ENCODE measurements at regions of chr16 and their contacts with region 1.

Region 1: GRCh38 chr16:21277927-21278706 is at the start of gene CRYM:
- DNase-seq: peak; percentile 33 to 91
- H3K4me3 ChIP-seq: peak within 1 kb of the TSS; percentile 50 to 69 (median 64)
- H3K27ac ChIP-seq: no peak within 1 kb of the TSS
- H3K4me1 ChIP-seq: peaks cover 4 to 10% (median 8%) of the 10 kb centered on the region in 4 experiments; a peak in 5 of 7 replicates
- H3K27me3 ChIP-seq: peaks cover 0 to 7% (median 0%) of the 10 kb centered on the region in 4 experiments; a peak in 4 of 7 replicates
- CTCF ChIP-seq: peak; percentile 76 to 88 (median 80)
- EP300 ChIP-seq: no peak
- POLR2A ChIP-seq: peak in 1 of 2 experiments; percentile 56; a peak in 2 of 3 replicates
- RAD21 ChIP-seq: peak; percentile 61 to 68
- total RNA-seq, gene CRYM: 12.9 and 14.3 TPM in 2 replicates

Region 2: GRCh38 chr16:21184834-21185233 is 93.3 kb before region 1 on chr16:
- CTCF ChIA-PET with region 1: interaction called, 57 read pairs
- POLR2A ChIA-PET with region 1: no interaction called
- DNase-seq: no peak
- H3K4me3 ChIP-seq: no peak overlapping the region
- H3K27ac ChIP-seq: no peak overlapping the region
- H3K4me1 ChIP-seq: no peaks in the 10 kb centered on the region
- H3K27me3 ChIP-seq: peaks cover 0 to 2% (median 0%) of the 10 kb centered on the region in 4 experiments; a peak in 2 of 7 replicates
- CTCF ChIP-seq: no peak
- EP300 ChIP-seq: no peak
- POLR2A ChIP-seq: no peak
- RAD21 ChIP-seq: no peak

Region 3: GRCh38 chr16:21190599-21190998 is 87.5 kb before region 1 on chr16:
- CTCF ChIA-PET with region 1: interaction called, 57 read pairs
- POLR2A ChIA-PET with region 1: no interaction called
- DNase-seq: no peak
- H3K4me3 ChIP-seq: no peak overlapping the region
- H3K27ac ChIP-seq: no peak overlapping the region
- H3K4me1 ChIP-seq: no peaks in the 10 kb centered on the region
- H3K27me3 ChIP-seq: peaks cover 0 to 2% (median 0%) of the 10 kb centered on the region in 4 experiments; a peak in 2 of 7 replicates
- CTCF ChIP-seq: no peak
- EP300 ChIP-seq: no peak
- POLR2A ChIP-seq: no peak
- RAD21 ChIP-seq: no peak

Region 4: DNA sequence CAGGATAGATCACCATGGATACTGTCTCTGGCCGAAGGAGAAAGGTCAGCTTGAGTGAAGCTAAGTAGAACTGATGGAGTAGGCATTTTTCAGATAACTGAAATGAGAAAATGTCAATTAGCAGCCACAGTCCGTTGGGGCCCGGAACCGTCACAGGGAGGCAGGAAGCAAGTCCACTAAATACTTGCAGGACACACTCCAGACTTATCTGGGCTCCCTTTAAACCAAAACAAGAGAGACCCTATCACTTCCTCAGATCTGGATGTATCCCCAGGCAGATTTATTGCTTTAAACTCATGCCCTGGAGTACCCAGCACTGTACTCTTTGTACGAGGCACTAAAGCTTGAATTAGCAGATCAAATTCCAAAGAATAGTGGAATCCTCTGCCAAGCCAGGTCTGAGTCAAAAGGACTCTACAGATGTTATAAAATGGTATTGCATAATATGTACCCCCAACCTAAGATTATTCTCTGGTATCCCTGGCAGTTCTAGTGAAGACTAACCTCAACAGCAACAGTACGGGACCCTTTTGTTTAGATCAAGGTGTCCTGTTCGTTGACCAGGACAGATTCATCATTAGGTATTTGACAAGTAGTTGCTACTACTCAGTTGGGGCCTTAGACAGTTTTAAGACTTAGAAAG is 74.8 kb before region 1 on chr16:
- CTCF ChIA-PET with region 1: interaction called, 10 read pairs
- POLR2A ChIA-PET with region 1: no interaction called
- DNase-seq: no peak
- H3K4me3 ChIP-seq: no peak overlapping the region
- H3K27ac ChIP-seq: no peak overlapping the region
- H3K4me1 ChIP-seq: no peaks in the 10 kb centered on the region
- H3K27me3 ChIP-seq: no peaks in the 10 kb centered on the region
- CTCF ChIP-seq: no peak
- EP300 ChIP-seq: no peak
- POLR2A ChIP-seq: no peak
- RAD21 ChIP-seq: no peak

Region 5: GRCh38 chr16:21218153-21218552 is 60.0 kb before region 1 on chr16:
- CTCF ChIA-PET with region 1: no interaction called
- POLR2A ChIA-PET with region 1: no interaction called
- DNase-seq: no peak
- H3K4me3 ChIP-seq: no peak overlapping the region
- H3K27ac ChIP-seq: no peak overlapping the region
- H3K4me1 ChIP-seq: peaks cover 3 to 13% (median 9%) of the 10 kb centered on the region in 4 experiments; a peak in 6 of 7 replicates
- H3K27me3 ChIP-seq: no peaks in the 10 kb centered on the region
- CTCF ChIP-seq: no peak
- EP300 ChIP-seq: no peak
- POLR2A ChIP-seq: no peak
- RAD21 ChIP-seq: no peak

Region 6: DNA sequence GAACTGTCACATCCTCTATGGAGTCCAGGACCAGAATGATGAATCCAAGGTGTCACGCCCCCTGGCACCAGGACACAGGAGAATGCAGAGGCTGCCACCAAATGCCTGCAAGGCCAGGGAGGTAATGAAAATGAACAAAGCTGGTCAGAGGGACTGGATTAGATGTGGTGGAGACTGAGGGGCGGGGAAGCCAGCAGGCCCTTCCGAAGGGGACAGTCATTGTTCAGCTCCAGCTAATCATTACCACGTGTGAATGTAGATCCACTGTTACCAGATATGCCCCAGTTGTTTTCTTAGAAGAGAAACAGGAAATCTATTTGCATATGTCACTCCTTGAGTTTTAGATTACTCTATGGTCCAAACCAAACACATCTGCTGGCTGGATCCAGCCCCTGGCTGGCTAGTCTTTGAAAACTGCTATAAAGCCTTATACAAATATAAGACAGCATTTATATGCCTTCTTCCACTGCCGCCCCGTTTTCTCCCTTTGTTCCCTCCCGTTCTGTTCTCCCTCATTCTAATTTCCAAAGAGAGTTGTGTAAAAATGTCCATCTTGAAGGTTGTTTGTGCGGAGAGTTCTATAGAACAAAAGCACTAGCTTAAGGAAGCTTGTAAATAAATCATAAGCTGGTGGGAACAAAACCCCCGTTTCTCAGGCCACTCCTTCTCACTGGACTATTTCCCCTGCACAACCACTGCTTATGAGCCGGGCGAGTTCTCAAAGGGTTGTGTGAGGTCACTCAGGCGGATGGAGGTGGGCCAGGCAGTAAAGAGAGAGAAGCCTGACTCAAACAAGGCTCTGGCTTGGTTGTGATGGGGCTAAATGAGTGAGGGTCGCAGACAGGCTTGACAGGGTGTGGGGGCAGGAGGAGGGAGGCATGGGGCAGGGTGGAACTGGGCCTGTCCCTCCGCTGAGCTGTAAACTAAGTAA is 14.2 kb before region 1 on chr16:
- CTCF ChIA-PET with region 1: interaction called, 18 read pairs
- POLR2A ChIA-PET with region 1: interaction called, 5 read pairs
- DNase-seq: no peak
- H3K4me3 ChIP-seq: no peak overlapping the region
- H3K27ac ChIP-seq: no peak overlapping the region
- H3K4me1 ChIP-seq: no peaks in the 10 kb centered on the region
- H3K27me3 ChIP-seq: no peaks in the 10 kb centered on the region
- CTCF ChIP-seq: no peak
- EP300 ChIP-seq: no peak
- POLR2A ChIP-seq: no peak
- RAD21 ChIP-seq: no peak

Region 7: GRCh38 chr16:21300309-21301167 is 22.4 kb after region 1 on chr16:
- CTCF ChIA-PET with region 1: interaction called, 29 read pairs
- POLR2A ChIA-PET with region 1: interaction called, 7 read pairs
- DNase-seq: peak; percentile 82 to 83
- H3K4me3 ChIP-seq: peak overlapping the region; percentile 34 to 74 (median 68)
- H3K27ac ChIP-seq: no peak overlapping the region
- H3K4me1 ChIP-seq: peaks cover 0 to 3% (median 2%) of the 10 kb centered on the region in 4 experiments; a peak in 4 of 7 replicates
- H3K27me3 ChIP-seq: peaks cover 8 to 38% (median 25%) of the 10 kb centered on the region in 4 experiments
- CTCF ChIP-seq: peak; percentile 74 to 98 (median 92)
- EP300 ChIP-seq: no peak
- POLR2A ChIP-seq: no peak
- RAD21 ChIP-seq: peak; percentile 96